K562 (cell line): ENCODE measurements at regions of chr5 and their contacts with region 1.

Region 1: GRCh38 chr5:112860929-112861637 is at the start of gene SRP19:
- DNase-seq: peak; percentile 88 to 98 (median 92)
- ATAC-seq: peak; percentile 98
- H3K4me3 ChIP-seq: peak within 1 kb of the TSS; percentile 82
- H3K27ac ChIP-seq: peak within 1 kb of the TSS; percentile 81
- H3K4me1 ChIP-seq: peaks cover 0 to 12% of the 10 kb centered on the region in 2 experiments; a peak in 2 of 5 replicates
- H3K27me3 ChIP-seq: no peaks in the 10 kb centered on the region
- CTCF ChIP-seq: no peak
- EP300 ChIP-seq: peak; percentile 31; the same call in 1 of the 2 replicates
- POLR2A ChIP-seq: peak; percentile 86
- RAD21 ChIP-seq: peak in 1 of 2 experiments; percentile 1; a peak in 1 of 4 replicates
- polyA plus RNA-seq, gene SRP19: 287 to 357 TPM

Region 2: GRCh38 chr5:112848116-112848811 is 12.8 kb before region 1 on chr5:
- CTCF ChIA-PET with region 1: no interaction called
- POLR2A ChIA-PET with region 1: interaction called, 12 read pairs
- in situ Hi-C with region 1: no loop called
- intact Hi-C with region 1: no loop called
- DNase-seq: peak; percentile 33 to 80 (median 54)
- ATAC-seq: peak; percentile 99
- H3K4me3 ChIP-seq: no peak overlapping the region
- H3K27ac ChIP-seq: peak overlapping the region; percentile 4; the same call in 1 of the 3 replicates
- H3K4me1 ChIP-seq: peaks cover 0 to 4% of the 10 kb centered on the region in 2 experiments; a peak in 1 of 5 replicates
- H3K27me3 ChIP-seq: no peaks in the 10 kb centered on the region
- CTCF ChIP-seq: peak; percentile 55 to 78 (median 72); a peak in 5 of 6 replicates
- EP300 ChIP-seq: no peak
- POLR2A ChIP-seq: no peak
- RAD21 ChIP-seq: peak in 1 of 2 experiments; percentile 68; a peak in 2 of 4 replicates